GM10248 (cell line): ENCODE measurements at regions of chr7 and their contacts with region 1.

Region 1: GRCh38 chr7:32347244-32347828 is 142.8 kb downstream of the LSM5 start:
- DNase-seq: peak; percentile 25
- CTCF ChIP-seq: peak; percentile 49

Region 2: DNA sequence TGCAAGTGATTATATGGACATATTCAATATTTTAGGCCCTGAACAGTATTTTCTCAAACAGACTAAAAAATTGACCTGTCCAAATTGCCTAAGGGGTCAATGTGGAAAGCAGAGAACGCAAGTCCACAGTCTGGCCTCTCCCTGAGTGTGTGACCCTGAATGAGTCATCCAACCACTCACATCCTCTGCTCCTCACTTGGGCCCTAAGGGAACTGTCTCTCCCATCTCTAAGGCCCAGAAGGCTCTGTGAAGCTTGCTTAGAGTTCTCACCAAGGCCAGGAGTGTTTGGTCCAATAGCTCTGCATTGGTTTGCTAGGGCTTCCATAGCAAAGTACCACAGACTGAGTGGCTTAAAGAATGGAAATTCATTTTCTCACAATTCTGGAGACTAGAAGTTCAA is 12.2 kb before region 1 on chr7:
- CTCF ChIA-PET with region 1: interaction called, 15 read pairs
- POLR2A ChIA-PET with region 1: no interaction called
- DNase-seq: no peak
- CTCF ChIP-seq: no peak

Region 3: DNA sequence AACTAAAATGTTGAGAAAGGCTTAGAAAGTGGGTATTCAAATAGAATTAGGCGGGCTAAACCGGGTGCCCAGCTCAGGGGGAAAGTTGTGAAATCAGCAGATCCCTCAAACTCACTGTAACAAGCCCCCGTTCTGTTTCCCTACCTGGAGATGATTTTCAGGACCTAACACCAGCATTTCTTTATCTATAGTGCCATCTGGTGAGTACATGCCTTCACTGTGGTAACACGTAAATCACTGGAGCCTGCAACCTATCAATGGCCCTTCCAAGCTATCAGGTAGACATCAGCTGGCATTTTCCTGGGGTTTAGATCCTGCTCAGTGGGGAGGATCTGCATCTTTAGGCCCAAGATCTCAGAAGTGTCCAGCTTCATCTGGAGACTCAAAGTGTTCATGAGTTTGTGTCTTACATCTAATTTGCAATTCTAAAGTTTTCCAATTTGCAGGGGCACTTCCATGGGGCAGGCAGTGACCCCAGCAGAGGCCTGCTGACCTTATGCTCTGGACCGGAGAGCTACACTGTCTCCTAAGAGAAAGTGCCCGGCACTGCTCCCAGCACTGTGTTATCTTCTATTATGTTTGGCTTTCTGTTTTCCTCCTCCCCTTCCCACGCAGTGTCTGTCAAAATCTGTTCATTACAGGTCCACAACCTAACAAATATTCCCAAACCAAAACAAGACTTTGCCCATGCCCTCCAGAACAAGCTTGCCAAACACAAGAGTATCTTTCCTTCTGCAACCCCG is 10.4 kb after region 1 on chr7:
- CTCF ChIA-PET with region 1: interaction called, 21 read pairs
- POLR2A ChIA-PET with region 1: no interaction called
- DNase-seq: no peak
- CTCF ChIP-seq: no peak

Region 4: DNA sequence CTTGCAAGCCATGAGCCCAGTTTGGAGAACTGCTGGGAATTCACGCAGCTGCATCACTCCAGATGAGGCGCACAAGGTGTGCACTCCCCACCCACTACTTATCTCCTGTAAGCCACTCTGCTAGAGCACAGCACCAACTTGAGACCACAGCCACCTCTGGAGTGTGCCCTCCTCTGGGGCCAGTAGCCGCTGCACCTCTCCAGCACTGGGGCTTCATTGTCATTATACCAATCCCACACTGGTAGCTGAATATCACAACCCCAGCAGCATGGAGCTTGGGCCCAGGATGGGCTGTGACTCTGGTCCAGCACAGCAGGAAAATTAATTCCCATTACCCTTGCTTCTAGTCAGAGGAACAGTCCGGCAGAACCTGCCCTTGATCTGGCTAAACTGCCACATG is 17.2 kb after region 1 on chr7:
- CTCF ChIA-PET with region 1: interaction called, 16 read pairs
- POLR2A ChIA-PET with region 1: no interaction called
- DNase-seq: no peak
- CTCF ChIP-seq: no peak

Region 5: GRCh38 chr7:32648408-32649156 is 301.2 kb after region 1 on chr7:
- CTCF ChIA-PET with region 1: no interaction called
- POLR2A ChIA-PET with region 1: no interaction called
- DNase-seq: no peak
- CTCF ChIP-seq: no peak